ENCODE measurements at regions of chr1 and their contacts with region 1.

Region 1: DNA sequence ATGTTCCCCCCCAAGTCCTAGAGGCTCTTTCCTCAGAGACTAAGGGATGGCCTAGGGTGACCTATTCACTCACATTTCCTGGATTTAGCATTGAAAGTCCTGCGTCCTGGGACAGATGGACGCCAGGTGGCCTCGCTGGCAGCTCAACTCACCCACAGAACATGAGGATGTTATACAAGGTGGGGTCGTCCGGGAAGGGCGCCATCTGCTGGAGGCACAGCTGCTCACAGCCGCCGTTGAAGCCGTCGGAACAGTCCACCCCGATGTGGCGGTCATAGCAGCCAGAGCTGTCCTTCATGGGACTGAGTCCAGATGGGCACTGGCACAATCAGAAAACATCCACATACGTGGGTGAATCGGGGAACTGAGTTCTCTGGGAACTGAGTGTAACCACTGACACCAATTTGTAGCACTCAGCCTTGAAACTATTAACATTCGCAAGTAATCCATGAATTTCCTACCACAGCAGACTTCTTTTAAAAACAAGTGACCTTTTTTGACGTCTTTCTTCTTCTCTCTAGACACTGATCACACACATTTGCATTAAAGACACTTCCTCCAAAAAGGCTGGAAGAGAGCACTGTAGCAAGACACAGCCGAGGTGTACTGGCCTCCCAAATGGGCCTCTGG is 215.4 kb downstream of the ASTN1 start:
- DNase-seq: peak; percentile 83 to 87 (median 85)
- ATAC-seq: peak; percentile 100
- H3K4me3 ChIP-seq: no peak overlapping the region
- H3K27ac ChIP-seq: no peak overlapping the region
- H3K4me1 ChIP-seq: no peaks in the 10 kb centered on the region
- H3K27me3 ChIP-seq: peaks cover 0 to 9% of the 10 kb centered on the region in 2 experiments; a peak in 1 of 5 replicates
- CTCF ChIP-seq: peak; percentile 97 to 99 (median 97)
- EP300 ChIP-seq: no peak
- POLR2A ChIP-seq: no peak
- RAD21 ChIP-seq: peak; percentile 51 to 84

Region 2: GRCh38 chr1:176843352-176844297 is 105.5 kb before region 1 on chr1:
- CTCF ChIA-PET with region 1: no interaction called
- POLR2A ChIA-PET with region 1: no interaction called
- in situ Hi-C with region 1: no loop called
- intact Hi-C with region 1: no loop called
- DNase-seq: peak; percentile 19 to 67 (median 34)
- ATAC-seq: peak; percentile 71
- H3K4me3 ChIP-seq: no peak overlapping the region
- H3K27ac ChIP-seq: no peak overlapping the region
- H3K4me1 ChIP-seq: peaks cover 0 to 10% of the 10 kb centered on the region in 2 experiments; a peak in 3 of 5 replicates
- H3K27me3 ChIP-seq: peaks cover 4 to 6% of the 10 kb centered on the region in 2 experiments; a peak in 3 of 5 replicates
- CTCF ChIP-seq: peak; percentile 54 to 87 (median 62); a peak in 5 of 6 replicates
- EP300 ChIP-seq: no peak
- POLR2A ChIP-seq: no peak
- RAD21 ChIP-seq: peak; percentile 94 to 95

Region 3: DNA sequence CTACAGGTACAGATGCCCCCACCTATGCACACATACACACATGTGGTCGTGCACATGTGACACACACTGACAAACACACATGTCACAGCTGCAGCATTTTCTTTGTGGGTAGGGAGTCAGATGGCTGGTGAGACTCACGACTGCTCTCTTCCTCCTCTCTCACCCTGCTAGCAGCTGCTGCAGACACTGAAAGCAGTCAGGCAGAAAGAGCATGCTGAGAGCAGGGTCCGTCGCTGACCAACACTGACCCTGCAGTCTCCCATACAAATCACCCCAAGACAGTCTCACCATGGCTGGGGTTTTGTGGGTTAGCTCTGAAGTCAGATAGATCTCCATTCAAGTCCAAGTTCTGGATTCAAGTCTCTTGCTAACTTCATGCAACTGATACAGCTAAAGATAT is 27.1 kb after region 1 on chr1:
- CTCF ChIA-PET with region 1: no interaction called
- POLR2A ChIA-PET with region 1: no interaction called
- in situ Hi-C with region 1: no loop called
- intact Hi-C with region 1: no loop called
- DNase-seq: no peak
- ATAC-seq: no peak
- H3K4me3 ChIP-seq: no peak overlapping the region
- H3K27ac ChIP-seq: no peak overlapping the region
- H3K4me1 ChIP-seq: no peaks in the 10 kb centered on the region
- H3K27me3 ChIP-seq: no peaks in the 10 kb centered on the region
- CTCF ChIP-seq: no peak
- EP300 ChIP-seq: no peak
- POLR2A ChIP-seq: no peak
- RAD21 ChIP-seq: no peak

Region 4: GRCh38 chr1:177181631-177182291 is 232.6 kb after region 1 on chr1:
- CTCF ChIA-PET with region 1: no interaction called
- POLR2A ChIA-PET with region 1: no interaction called
- in situ Hi-C with region 1: no loop called
- intact Hi-C with region 1: loop called (anchors 1 kb)
- DNase-seq: peak; percentile 77 to 85 (median 81)
- ATAC-seq: peak; percentile 99
- H3K4me3 ChIP-seq: no peak overlapping the region
- H3K27ac ChIP-seq: no peak overlapping the region
- H3K4me1 ChIP-seq: peaks cover 0 to 7% of the 10 kb centered on the region in 2 experiments; a peak in 2 of 5 replicates
- H3K27me3 ChIP-seq: no peaks in the 10 kb centered on the region
- CTCF ChIP-seq: peak; percentile 75 to 87 (median 81)
- EP300 ChIP-seq: no peak
- POLR2A ChIP-seq: no peak
- RAD21 ChIP-seq: peak; percentile 42 to 59